ENCODE measurements at regions of chr5 and their contacts with region 1.

Region 1: GRCh38 chr5:140042643-140043500 is at the start of gene NRG2:
- DNase-seq: peak; percentile 46 to 87
- H3K4me3 ChIP-seq: peak within 1 kb of the TSS; percentile 33 to 67 (median 50)
- H3K27ac ChIP-seq: no peak within 1 kb of the TSS
- H3K4me1 ChIP-seq: peaks cover 0 to 11% (median 2%) of the 10 kb centered on the region in 4 experiments; a peak in 6 of 7 replicates
- H3K27me3 ChIP-seq: peaks cover 33 to 74% (median 58%) of the 10 kb centered on the region in 4 experiments
- CTCF ChIP-seq: peak; percentile 67 to 89 (median 68)
- EP300 ChIP-seq: no peak
- POLR2A ChIP-seq: no peak
- RAD21 ChIP-seq: 0 out of 4 replicates have a peak, but pooled peaks have one; percentile 1 to 18
- total RNA-seq, gene NRG2: 0.21 and 0.54 TPM in 2 replicates

Region 2: DNA sequence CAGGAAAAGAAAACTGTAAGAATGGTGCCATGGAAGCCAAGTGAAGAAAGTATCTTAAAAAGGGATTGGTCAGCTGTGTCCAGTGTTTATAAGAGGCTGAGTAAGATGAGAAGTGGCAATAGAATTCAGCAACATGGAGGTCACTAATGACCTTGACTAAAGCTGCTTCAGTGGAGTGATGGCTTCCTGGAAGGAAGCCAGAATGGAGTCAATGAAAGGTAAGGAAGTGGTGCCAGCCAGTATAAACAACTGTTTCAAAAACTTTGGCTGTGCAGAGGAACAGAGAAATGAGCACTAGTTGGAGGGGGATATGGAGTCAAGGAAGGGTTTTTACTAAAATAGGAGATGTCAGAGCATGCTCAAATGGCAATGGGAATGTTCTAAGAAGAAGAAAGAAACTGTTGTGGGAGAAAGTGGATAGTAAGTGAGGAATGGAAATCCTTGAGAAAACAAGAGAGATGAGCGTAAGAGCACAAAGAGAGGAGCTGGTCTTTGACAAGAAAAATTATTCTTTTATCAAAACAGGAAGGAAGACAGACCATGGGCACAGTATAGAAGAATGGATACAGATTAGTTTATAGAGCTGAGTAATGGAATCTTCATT is 11.3 kb after region 1 on chr5:
- CTCF ChIA-PET with region 1: interaction called, 17 read pairs
- POLR2A ChIA-PET with region 1: interaction called, 3 read pairs
- DNase-seq: no peak
- H3K4me3 ChIP-seq: no peak overlapping the region
- H3K27ac ChIP-seq: no peak overlapping the region
- H3K4me1 ChIP-seq: no peaks in the 10 kb centered on the region
- H3K27me3 ChIP-seq: no peaks in the 10 kb centered on the region; a peak in 3 of 7 replicates
- CTCF ChIP-seq: no peak
- EP300 ChIP-seq: no peak
- POLR2A ChIP-seq: no peak
- RAD21 ChIP-seq: no peak

Measured in H1 (cell line).